SK-N-SH (cell line): ENCODE measurements at regions of chr17 and their contacts with region 1.

Region 1: DNA sequence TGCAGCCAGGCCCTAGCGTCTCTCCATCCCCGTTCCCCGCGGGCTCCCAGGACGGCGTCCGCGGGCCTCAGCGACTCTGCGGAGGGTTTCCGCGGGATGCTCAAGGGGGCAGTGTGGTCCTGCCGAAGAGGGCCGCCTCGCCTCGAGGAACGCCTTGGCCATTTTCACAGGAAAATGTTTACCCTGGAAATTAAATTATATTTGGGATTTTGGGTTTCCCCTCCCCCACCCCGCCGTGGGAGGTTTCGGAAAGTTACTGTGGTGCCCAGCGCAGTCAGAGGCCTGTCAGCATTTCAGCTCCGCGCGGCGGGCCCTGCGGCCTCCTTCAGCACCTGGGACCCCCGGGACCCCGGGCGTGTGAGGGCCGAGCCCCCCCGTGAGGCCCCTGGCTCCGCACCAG is 94.5 kb downstream of the PCTP start:
- DNase-seq: peak; percentile 88
- H3K4me3 ChIP-seq: peak overlapping the region in 1 of 2 experiments; percentile 29; a peak in 1 of 4 replicates
- H3K27ac ChIP-seq: no peak overlapping the region
- H3K4me1 ChIP-seq: no peaks in the 10 kb centered on the region
- H3K27me3 ChIP-seq: no peaks in the 10 kb centered on the region
- CTCF ChIP-seq: peak; percentile 59
- EP300 ChIP-seq: no peak
- RAD21 ChIP-seq: peak; percentile 75

Region 2: DNA sequence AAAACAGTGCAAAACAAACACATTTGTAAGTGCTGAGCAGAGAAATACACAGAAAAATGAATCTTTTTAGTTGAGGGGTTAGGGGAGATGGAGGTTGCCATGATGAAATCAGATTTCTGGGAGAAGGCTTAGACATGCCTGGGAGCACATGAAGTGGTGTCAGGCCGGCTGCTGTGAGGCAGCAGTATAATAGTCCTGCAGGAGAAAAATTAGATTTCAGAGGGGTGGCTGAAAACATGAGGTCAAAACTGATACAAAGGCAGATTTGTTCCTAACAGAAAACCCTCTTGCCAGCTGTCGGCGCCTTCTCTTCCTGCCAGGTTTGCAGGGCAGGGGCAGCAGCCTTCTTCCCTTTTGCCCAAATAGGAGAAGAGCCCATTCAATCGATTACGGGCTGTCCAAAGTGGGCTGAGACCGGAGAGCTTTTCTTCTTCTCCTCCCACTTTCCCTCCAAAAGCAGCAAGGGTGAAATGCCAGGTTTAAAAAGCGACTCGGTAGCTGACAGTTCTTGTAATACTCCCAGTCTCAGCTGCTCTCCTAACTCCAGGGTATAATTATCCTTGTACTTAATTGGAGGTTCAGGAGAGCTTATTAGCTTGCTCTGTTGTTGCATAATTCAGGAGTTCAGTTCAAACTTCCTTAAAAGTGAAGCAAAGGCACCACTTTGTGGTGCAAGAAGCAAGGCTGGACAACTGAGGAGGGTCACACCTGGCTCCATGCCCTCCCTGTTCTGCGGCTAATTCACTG is 14.5 kb before region 1 on chr17:
- CTCF ChIA-PET with region 1: interaction called, 17 read pairs
- POLR2A ChIA-PET with region 1: no interaction called
- DNase-seq: peak; percentile 54
- H3K4me3 ChIP-seq: no peak overlapping the region
- H3K27ac ChIP-seq: peak overlapping the region in 1 of 2 experiments; percentile 35; a peak in 1 of 4 replicates
- H3K4me1 ChIP-seq: peaks cover 0 to 12% of the 10 kb centered on the region in 2 experiments; a peak in 2 of 4 replicates
- H3K27me3 ChIP-seq: peaks cover 15% of the 10 kb centered on the region; the same call in 1 of the 2 replicates
- CTCF ChIP-seq: no peak
- EP300 ChIP-seq: no peak
- RAD21 ChIP-seq: no peak

Region 3: DNA sequence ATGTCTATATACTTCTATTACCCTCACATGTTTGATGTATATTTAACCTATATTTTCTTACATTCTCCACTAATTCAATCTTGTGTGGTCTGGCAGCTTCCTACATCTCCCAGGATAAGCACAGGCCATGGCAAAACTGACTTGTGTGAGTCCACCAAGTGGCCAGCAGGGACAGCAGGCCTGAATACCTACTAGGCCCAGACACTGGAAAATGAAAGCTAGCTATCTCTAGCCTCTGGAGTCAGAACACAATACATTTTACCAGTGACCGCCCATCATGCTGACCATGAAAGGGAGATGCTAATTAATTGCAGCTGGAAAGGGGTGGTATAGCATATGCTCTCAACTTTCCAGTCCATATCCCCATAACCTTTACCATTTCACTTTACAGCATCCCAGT is 37.8 kb after region 1 on chr17:
- CTCF ChIA-PET with region 1: interaction called, 12 read pairs
- POLR2A ChIA-PET with region 1: no interaction called
- DNase-seq: peak; percentile 7
- H3K4me3 ChIP-seq: no peak overlapping the region
- H3K27ac ChIP-seq: no peak overlapping the region
- H3K4me1 ChIP-seq: no peaks in the 10 kb centered on the region; a peak in 1 of 4 replicates
- H3K27me3 ChIP-seq: no peaks in the 10 kb centered on the region
- CTCF ChIP-seq: peak; percentile 23; the same call in 1 of the 2 replicates
- EP300 ChIP-seq: no peak
- RAD21 ChIP-seq: no peak

Region 4: DNA sequence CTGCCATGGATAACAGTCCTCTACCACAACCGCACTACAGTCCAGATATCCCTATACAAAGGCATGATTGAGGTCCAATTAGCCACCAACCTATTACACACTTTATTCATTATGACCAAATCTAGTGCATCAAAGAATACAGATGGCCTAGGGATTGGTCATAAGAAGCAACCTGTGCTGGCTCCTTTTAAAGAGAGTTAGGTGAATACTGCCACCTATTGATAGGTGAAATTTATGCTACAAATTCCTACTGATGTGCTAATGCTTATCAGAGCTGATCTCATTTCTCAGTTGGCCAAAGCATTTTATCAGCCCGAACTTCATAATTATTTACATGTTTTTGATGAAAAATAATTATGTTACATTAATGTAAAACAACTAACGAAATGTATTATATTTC is 474.1 kb after region 1 on chr17:
- CTCF ChIA-PET with region 1: interaction called, 10 read pairs
- POLR2A ChIA-PET with region 1: no interaction called
- DNase-seq: peak; percentile 33
- H3K4me3 ChIP-seq: no peak overlapping the region
- H3K27ac ChIP-seq: no peak overlapping the region
- H3K4me1 ChIP-seq: no peaks in the 10 kb centered on the region
- H3K27me3 ChIP-seq: peaks cover 4% of the 10 kb centered on the region; the same call in 1 of the 2 replicates
- CTCF ChIP-seq: peak; percentile 92
- EP300 ChIP-seq: no peak
- RAD21 ChIP-seq: peak; percentile 81